Colonic mucosa (tissue), 4 donors: ENCODE measurements at regions of chr16 and their contacts with region 1.

Region 1: DNA sequence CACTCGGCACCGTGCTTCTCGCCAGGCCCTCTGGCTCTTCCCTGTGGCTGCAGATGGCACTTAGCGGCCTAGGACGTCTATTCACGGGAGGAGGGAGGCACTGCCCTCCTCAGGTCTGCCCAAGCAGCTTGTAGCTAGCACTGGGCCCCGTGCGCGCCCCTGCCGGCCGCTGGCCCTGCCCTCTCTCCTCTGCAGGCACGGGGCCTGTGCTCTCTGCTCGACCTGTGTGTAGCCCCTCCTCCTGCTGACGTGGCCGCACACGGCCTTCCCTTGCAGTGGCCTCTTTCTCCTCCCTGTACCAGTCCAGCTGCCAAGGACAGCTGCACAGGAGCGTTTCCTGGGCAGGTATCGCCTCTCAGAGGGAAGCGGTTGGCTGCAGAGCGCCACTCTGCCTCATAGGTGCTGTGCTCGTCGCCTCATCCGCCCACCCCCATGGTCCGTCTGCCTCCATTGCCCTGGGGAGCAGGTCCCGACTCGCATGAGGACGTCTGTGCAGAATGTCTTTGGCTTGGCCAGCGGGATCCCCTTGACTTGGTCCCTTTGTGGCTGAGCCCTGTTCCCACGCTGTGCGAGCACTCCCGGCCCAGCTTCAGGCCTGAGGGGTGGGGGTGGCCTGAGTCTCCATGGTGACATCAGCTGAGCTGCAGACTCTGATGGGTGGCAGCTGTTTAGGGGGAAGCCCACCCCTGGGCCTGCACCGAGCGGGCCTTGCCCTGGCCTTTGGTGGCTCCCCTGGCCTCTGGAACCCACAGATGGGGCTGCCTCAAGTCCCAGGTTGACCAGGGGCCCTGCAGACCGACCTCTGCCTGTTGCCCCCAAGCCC is 34.6 kb downstream of the TSC2 start:
- DNase-seq: peak; percentile 70
- H3K4me3 ChIP-seq: no peak overlapping the region
- H3K27ac ChIP-seq: peak overlapping the region; percentile 32
- H3K4me1 ChIP-seq: no peaks in the 10 kb centered on the region
- H3K27me3 ChIP-seq: no peaks in the 10 kb centered on the region
- CTCF ChIP-seq: no peak

Region 2: GRCh38 chr16:1772736-1773584 is 309.4 kb before region 1 on chr16 and contains the starts of genes EME2 and MRPS34:
- intact Hi-C with region 1: no loop called
- DNase-seq: peak; percentile 85
- H3K4me3 ChIP-seq: peak within 1 kb of the TSS; percentile 96
- H3K27ac ChIP-seq: peak within 1 kb of the TSS; percentile 98
- H3K4me1 ChIP-seq: peaks cover 11% of the 10 kb centered on the region
- H3K27me3 ChIP-seq: no peaks in the 10 kb centered on the region
- CTCF ChIP-seq: peak; percentile 81
- total RNA-seq, gene EME2: 16.7 to 30.6 TPM
- total RNA-seq, gene MRPS34: 106 to 227 TPM

Region 3: GRCh38 chr16:2023098-2023925 is 59.1 kb before region 1 on chr16:
- intact Hi-C with region 1: loop called (anchors 10 kb)
- DNase-seq: peak; percentile 98
- H3K4me3 ChIP-seq: peak overlapping the region; percentile 27
- H3K27ac ChIP-seq: peak overlapping the region; percentile 57
- H3K4me1 ChIP-seq: peaks cover 12% of the 10 kb centered on the region
- H3K27me3 ChIP-seq: peaks cover 24% of the 10 kb centered on the region
- CTCF ChIP-seq: peak; percentile 80

Region 4: GRCh38 chr16:2142942-2143877 is 60.8 kb after region 1 on chr16:
- intact Hi-C with region 1: loop called (anchors 5 kb)
- DNase-seq: no peak
- H3K4me3 ChIP-seq: no peak overlapping the region
- H3K27ac ChIP-seq: no peak overlapping the region
- H3K4me1 ChIP-seq: peaks cover 10% of the 10 kb centered on the region
- H3K27me3 ChIP-seq: no peaks in the 10 kb centered on the region
- CTCF ChIP-seq: no peak

Region 5: GRCh38 chr16:2194852-2195321 is 112.5 kb after region 1 on chr16:
- intact Hi-C with region 1: no loop called
- DNase-seq: peak; percentile 59
- H3K4me3 ChIP-seq: no peak overlapping the region
- H3K27ac ChIP-seq: no peak overlapping the region
- H3K4me1 ChIP-seq: no peaks in the 10 kb centered on the region
- H3K27me3 ChIP-seq: peaks cover 34% of the 10 kb centered on the region
- CTCF ChIP-seq: peak; percentile 50